Posterior cingulate gyrus (tissue), 11 donors: ENCODE measurements at regions of chr14 and their contacts with region 1.

Region 1: DNA sequence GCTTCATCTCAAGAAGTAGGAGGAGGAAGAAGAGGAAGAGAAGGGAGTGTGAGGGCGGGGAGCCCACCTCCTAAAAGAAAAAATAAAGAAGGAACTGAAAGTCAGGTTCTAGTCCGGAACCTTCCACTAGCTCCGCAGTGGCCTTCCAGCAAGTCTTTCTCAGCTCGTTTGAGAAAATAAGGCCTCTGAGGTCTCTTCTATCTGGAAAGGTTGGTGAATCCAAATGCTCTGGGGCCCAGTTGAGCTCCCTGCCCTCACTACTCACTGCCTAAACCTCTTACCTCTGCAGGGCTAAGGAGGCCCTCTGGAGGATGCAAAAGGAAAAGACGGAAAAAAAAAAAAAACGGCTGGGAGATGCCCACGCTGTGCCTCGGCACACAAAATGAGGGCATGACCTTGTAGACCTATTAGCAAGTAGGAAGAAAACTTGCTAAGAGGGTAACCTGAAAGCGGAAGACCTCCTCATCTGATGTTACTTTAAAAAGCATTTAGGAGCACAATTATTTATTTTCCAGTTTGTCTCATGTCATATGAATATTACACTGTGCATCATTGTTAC is 35.9 kb downstream of the FBLN5 start:
- DNase-seq: peak in 2 of 10 donors; percentile 15 to 27

Region 2: DNA sequence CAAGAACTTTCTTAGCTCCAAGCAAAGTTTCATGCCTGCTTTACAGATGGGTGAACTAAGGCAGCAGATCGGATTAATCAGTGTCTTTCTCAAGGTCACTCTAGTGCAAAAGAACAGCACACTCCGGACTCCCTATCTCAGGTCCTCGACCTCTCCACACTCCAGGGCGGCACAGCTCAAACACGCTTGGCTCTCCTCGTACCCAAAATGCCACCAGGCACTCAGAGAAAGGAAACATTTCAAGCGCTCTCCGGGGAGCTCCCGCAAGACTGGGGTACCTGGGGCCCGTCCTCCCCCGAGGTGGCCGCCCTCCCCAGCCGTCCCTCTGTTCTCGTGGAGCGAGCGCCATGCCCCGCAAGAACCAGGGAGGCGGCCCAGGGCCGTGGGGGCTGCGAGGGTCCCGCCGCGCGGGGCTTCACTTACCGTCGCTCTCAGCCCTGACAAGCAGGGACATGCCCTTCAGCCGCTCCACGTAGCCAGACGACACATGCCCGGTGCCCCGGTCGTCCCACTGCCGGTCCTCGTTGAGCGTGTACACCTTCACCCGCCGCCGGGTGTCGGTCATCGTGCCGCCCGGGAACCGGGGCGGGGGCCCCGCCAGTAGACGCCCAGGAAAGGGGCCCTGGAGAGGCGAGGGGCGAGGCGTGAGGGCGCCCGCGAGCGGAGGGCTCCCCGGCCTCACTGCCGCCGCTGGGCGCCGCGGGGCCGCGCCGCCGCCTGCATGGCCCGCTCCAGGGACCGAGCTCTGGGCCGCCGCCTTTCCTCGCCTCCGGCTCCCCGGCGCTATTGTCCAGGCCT is 402.3 kb before region 1 on chr14:
- intact Hi-C with region 1: loop called (anchors 10 kb)
- DNase-seq: peak in 8 of 10 donors; percentile 6 to 89 (median 22)

Region 3: GRCh38 chr14:91649930-91650329 is 261.6 kb before region 1 on chr14:
- intact Hi-C with region 1: loop called (anchors 5 kb)
- DNase-seq: peak in 1 of 10 donors; percentile 13

Region 4: DNA sequence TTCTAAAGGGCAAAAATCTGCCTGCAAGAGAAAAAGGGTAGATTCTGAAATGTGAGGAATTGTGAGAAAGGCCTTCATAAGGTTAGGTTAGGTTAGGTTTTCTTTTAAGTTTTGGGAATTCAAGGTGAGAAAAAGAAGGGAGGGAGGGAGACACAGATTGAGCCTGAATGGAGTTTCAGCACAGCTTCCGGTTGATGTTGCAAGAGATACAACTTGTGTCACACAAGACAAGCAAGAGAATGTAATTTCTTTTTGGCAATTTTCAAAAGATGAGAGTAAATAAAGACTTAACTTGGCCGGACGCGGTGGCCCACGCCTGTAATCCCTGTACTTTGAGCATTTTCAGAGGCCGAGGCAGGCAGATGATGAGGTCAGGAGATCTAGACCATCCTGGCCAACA is 274.0 kb after region 1 on chr14:
- intact Hi-C with region 1: no loop called
- DNase-seq: no peak